ENCODE measurements at regions of chr11 and their contacts with region 1.

Region 1: DNA sequence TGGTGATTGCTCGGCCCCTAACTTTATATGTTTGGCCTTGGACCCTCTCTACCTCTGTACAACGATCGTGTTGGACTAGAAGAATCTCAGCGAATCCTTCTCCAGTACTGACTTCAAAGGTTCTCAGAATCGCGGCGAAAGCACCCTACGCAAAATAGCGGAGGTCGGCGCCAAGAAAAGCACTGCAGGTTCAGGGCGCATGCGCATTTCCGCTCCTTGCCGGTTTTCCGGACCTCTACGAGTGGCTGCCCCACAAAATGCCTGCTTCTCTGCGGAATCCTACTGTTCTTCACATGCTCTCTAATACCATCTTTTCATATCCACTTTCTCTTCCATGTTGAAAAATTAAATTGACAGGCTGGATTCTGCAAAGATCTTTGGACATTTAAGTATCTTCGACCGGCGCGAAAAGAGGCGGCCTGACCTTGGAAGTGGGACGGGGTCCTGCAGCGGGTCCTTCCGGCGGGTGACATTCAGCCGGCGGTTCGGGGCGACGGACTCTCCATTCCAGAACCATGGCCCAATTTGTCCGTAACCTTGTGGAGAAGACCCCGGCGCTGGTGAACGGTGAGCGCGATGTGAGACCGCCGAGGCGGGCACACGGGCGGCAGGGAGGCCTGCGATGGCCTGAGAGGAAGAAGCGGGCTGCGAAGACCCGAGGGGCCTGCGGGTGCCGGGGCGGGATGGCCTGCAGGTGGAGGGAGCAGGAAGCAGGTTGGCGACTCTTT is at the start of gene ATP5MG:
- DNase-seq: peak; percentile 90 to 94 (median 91)
- ATAC-seq: peak; percentile 82
- H3K4me3 ChIP-seq: peak within 1 kb of the TSS; percentile 95
- H3K27ac ChIP-seq: peak within 1 kb of the TSS; percentile 96
- H3K4me1 ChIP-seq: peaks cover 15 to 17% of the 10 kb centered on the region in 2 experiments; a peak in 4 of 5 replicates
- H3K27me3 ChIP-seq: no peaks in the 10 kb centered on the region
- CTCF ChIP-seq: peak in 2 of 3 experiments; percentile 1 to 8; a peak in 1 of 6 replicates
- EP300 ChIP-seq: no peak
- POLR2A ChIP-seq: peak; percentile 84
- RAD21 ChIP-seq: no peak; a peak in 1 of 4 replicates
- polyA plus RNA-seq, gene ATP5MG: 1,842 to 2,138 TPM

Region 2: DNA sequence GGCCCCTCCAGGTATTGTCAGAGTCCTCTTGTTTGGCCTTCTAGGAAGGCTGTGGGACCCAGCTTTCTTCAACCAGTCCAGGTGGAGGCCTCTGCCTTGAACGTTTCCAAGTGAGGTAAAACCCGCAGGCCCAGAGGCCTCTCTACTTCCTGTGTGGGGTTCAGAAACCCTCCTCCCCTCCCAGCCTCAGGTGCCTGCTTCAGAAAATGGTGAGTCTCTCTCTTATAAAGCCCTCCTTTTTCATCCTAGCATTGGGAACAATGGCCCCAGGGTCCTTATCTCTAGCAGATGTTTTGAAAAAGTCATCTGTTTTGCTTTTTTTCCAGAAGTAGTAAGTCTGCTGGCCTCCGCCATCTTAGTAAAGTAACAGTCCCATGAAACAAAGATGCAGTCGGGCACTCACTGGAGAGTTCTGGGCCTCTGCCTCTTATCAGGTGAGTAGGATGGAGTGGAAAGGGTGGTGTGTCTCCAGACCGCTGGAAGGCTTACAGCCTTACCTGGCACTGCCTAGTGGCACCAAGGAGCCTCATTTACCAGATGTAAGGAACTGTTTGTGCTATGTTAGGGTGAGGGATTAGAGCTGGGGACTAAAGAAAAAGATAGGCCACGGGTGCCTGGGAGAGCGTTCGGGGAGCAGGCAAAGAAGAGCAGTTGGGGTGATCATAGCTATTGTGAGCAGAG is 96.6 kb before region 1 on chr11 and contains the start of gene CD3E:
- CTCF ChIA-PET with region 1: no interaction called
- POLR2A ChIA-PET with region 1: no interaction called
- in situ Hi-C with region 1: no loop called
- intact Hi-C with region 1: no loop called
- DNase-seq: no peak
- ATAC-seq: peak; percentile 49
- H3K4me3 ChIP-seq: no peak within 1 kb of the TSS
- H3K27ac ChIP-seq: no peak within 1 kb of the TSS
- H3K4me1 ChIP-seq: no peaks in the 10 kb centered on the region; a peak in 1 of 5 replicates
- H3K27me3 ChIP-seq: peaks cover 7 to 10% of the 10 kb centered on the region in 2 experiments; a peak in 3 of 5 replicates
- CTCF ChIP-seq: no peak
- EP300 ChIP-seq: no peak
- POLR2A ChIP-seq: no peak
- RAD21 ChIP-seq: no peak
- polyA plus RNA-seq, gene CD3E: not detected

Region 3: GRCh38 chr11:118380571-118380970 is 20.7 kb before region 1 on chr11:
- CTCF ChIA-PET with region 1: no interaction called
- POLR2A ChIA-PET with region 1: interaction called, 10 read pairs
- in situ Hi-C with region 1: no loop called
- intact Hi-C with region 1: no loop called
- DNase-seq: no peak
- ATAC-seq: no peak
- H3K4me3 ChIP-seq: no peak overlapping the region
- H3K27ac ChIP-seq: no peak overlapping the region
- H3K4me1 ChIP-seq: no peaks in the 10 kb centered on the region
- H3K27me3 ChIP-seq: no peaks in the 10 kb centered on the region
- CTCF ChIP-seq: no peak
- EP300 ChIP-seq: no peak
- POLR2A ChIP-seq: no peak
- RAD21 ChIP-seq: no peak

Measured in K562 (cell line).